Activated CD4-positive, alpha-beta T cell treated with anti-CD3 and anti-CD28 coated beads, Interleukin-2, amount 10 ng/mL, durations not matched to agents 7 days and 5 days (primary cell): ENCODE measurements at regions of chr11 and their contacts with region 1.

Region 1: GRCh38 chr11:87397011-87397865 is 359.5 kb downstream of the TMEM135 start:
- DNase-seq: no peak
- H3K4me3 Mint-ChIP-seq: no peak overlapping the region
- H3K27ac Mint-ChIP-seq: no peak overlapping the region
- H3K4me1 Mint-ChIP-seq: no peaks in the 10 kb centered on the region
- H3K27me3 Mint-ChIP-seq: peaks cover 13% of the 10 kb centered on the region

Region 2: GRCh38 chr11:87266751-87267150 is 130.5 kb before region 1 on chr11:
- CTCF ChIA-PET with region 1: no interaction called
- POLR2A ChIA-PET with region 1: interaction called, 10 read pairs
- DNase-seq: no peak
- H3K4me3 Mint-ChIP-seq: no peak overlapping the region
- H3K27ac Mint-ChIP-seq: no peak overlapping the region
- H3K4me1 Mint-ChIP-seq: no peaks in the 10 kb centered on the region
- H3K27me3 Mint-ChIP-seq: no peaks in the 10 kb centered on the region

Region 3: GRCh38 chr11:87545858-87546257 is 148.6 kb after region 1 on chr11:
- CTCF ChIA-PET with region 1: no interaction called
- POLR2A ChIA-PET with region 1: no interaction called
- DNase-seq: no peak
- H3K4me3 Mint-ChIP-seq: no peak overlapping the region
- H3K27ac Mint-ChIP-seq: no peak overlapping the region
- H3K4me1 Mint-ChIP-seq: no peaks in the 10 kb centered on the region
- H3K27me3 Mint-ChIP-seq: no peaks in the 10 kb centered on the region